ENCODE measurements at regions of chr3 and their contacts with region 1.

Region 1: DNA sequence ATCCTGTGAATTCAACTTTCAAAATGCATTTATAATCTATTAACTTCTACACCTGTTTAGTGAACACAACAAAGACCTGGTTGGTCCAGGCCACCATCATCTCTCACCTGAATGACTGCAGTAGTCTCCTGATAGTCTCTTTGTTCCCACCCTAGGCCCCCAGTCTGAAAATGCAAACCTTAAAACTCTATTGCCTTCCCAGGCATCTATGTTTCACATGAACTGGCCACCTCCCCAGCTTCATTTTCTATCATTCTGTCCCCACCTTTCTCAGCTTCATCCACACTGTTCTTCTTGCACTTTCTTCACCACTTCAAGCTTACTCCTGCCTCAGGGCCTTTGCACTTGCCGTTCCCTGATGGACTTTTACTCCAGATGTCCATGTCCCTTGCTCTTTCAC is 45.0 kb downstream of the CLSTN2 start:
- DNase-seq: no peak
- H3K4me3 ChIP-seq: no peak overlapping the region
- H3K27ac ChIP-seq: no peak overlapping the region
- H3K27me3 ChIP-seq: no peaks in the 10 kb centered on the region
- CTCF ChIP-seq: no peak

Region 2: GRCh38 chr3:140051019-140051957 is 71.3 kb after region 1 on chr3:
- intact Hi-C with region 1: loop called in 1 of 2 experiments (anchors 2 kb)
- DNase-seq: peak in 9 of 10 donors; percentile 16 to 70 (median 53)
- H3K4me3 ChIP-seq: no peak overlapping the region
- H3K27ac ChIP-seq: no peak overlapping the region
- H3K27me3 ChIP-seq: no peaks in the 10 kb centered on the region
- CTCF ChIP-seq: peak; percentile 10 to 84 (median 62)

Measured in dorsolateral prefrontal cortex (tissue), 120 donors.